ENCODE measurements at regions of chr21 and their contacts with region 1.

Region 1: GRCh38 chr21:38913120-38913892 is 107.6 kb downstream of the ETS2 start:
- DNase-seq: peak; percentile 87 to 91 (median 90)
- H3K4me3 ChIP-seq: peak overlapping the region; percentile 26
- H3K27ac ChIP-seq: peak overlapping the region; percentile 77 to 81
- H3K4me1 ChIP-seq: peaks cover 19% of the 10 kb centered on the region
- H3K27me3 ChIP-seq: no peaks in the 10 kb centered on the region
- CTCF ChIP-seq: no peak
- EP300 ChIP-seq: no peak
- POLR2A ChIP-seq: peak; percentile 17

Region 2: DNA sequence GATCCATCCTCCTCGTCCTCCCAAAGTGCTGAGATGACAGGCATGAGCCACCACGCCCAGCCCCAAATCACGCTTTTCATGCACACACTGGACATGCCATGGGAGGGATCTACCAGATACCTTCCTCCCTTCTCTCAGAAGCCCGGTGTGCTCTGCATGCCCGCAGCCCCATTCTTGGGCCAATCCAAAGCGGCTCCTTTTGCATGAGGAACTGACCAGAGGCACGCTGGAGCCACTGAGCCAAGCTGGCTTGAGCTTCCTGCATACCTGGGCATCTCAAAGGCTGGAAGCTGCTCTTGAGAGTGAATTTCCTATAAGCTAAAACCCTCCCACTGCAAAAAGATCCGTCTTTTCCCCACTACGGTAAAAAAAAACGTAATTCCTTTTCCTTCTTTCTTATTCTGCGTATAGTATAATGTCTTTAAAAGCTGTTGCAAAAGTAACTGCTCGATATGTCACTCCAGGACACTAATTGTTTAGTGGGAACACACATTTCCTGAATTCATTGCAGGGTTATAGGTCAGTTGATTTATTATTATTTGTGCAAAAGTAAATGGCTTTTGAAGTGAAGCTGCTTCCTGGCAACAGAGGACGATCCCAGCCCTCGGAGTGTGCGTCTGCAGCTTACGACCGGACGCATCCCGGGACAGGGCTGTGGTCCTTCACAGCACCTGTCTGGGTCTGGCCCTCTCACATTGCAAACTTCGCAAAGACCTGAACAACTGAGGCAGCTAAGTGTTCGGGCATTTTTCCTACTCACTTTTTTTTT is 169.4 kb before region 1 on chr21:
- intact Hi-C with region 1: loop called in 1 of 4 experiments (anchors 10 kb)
- DNase-seq: no peak
- H3K4me3 ChIP-seq: no peak overlapping the region
- H3K27ac ChIP-seq: no peak overlapping the region
- H3K4me1 ChIP-seq: no peaks in the 10 kb centered on the region
- H3K27me3 ChIP-seq: no peaks in the 10 kb centered on the region
- CTCF ChIP-seq: no peak
- EP300 ChIP-seq: no peak
- POLR2A ChIP-seq: no peak

Region 3: DNA sequence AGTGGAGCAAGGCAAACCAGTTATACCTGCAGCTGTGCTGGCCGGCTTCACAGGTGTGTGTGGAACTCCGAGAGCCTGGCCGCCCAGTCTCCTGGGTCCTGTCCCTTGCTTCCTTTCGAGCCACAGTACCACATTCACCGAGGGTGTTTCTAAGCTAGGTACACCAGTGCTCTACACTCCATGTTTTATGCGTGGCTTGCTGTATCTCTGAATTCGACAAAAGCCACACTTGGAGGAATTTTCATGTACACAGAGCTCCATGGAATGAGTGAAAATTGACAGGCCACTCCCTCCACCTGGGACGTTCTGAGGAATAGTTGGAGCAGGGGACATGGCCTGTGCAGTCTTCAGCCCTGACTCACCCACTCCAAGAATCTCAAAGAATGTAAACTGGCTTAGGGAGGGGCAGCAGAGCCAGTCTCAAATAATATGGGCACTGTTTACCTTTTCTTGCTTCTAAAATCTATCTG is 93.6 kb before region 1 on chr21:
- intact Hi-C with region 1: loop called in 1 of 4 experiments (anchors 10 kb)
- DNase-seq: no peak
- H3K4me3 ChIP-seq: no peak overlapping the region
- H3K27ac ChIP-seq: no peak overlapping the region
- H3K4me1 ChIP-seq: peaks cover 2% of the 10 kb centered on the region
- H3K27me3 ChIP-seq: no peaks in the 10 kb centered on the region
- CTCF ChIP-seq: no peak
- EP300 ChIP-seq: no peak
- POLR2A ChIP-seq: no peak

Region 4: GRCh38 chr21:39125752-39126485 is 212.6 kb after region 1 on chr21:
- intact Hi-C with region 1: loop called in 1 of 4 experiments (anchors 10 kb)
- DNase-seq: peak; percentile 47 to 64 (median 51)
- H3K4me3 ChIP-seq: no peak overlapping the region
- H3K27ac ChIP-seq: no peak overlapping the region
- H3K4me1 ChIP-seq: no peaks in the 10 kb centered on the region
- H3K27me3 ChIP-seq: no peaks in the 10 kb centered on the region
- CTCF ChIP-seq: peak in 2 of 3 donors; percentile 47 to 79
- EP300 ChIP-seq: no peak
- POLR2A ChIP-seq: no peak